PC-3 (cell line): ENCODE measurements at regions of chr3 and their contacts with region 1.

Region 1: GRCh38 chr3:29065211-29065785 is 215.6 kb upstream of the RBMS3 start:
- DNase-seq: peak; percentile 98
- ATAC-seq: peak; percentile 100
- H3K4me3 ChIP-seq: no peak overlapping the region
- H3K27ac ChIP-seq: peak overlapping the region; percentile 61
- H3K4me1 ChIP-seq: peaks cover 14% of the 10 kb centered on the region
- H3K27me3 ChIP-seq: no peaks in the 10 kb centered on the region
- CTCF ChIP-seq: no peak

Region 2: GRCh38 chr3:28853830-28854229 is 211.5 kb before region 1 on chr3:
- CTCF ChIA-PET with region 1: no interaction called
- POLR2A ChIA-PET with region 1: no interaction called
- intact Hi-C with region 1: loop called (anchors 5 kb)
- DNase-seq: peak; percentile 46
- ATAC-seq: peak; percentile 67
- H3K4me3 ChIP-seq: no peak overlapping the region
- H3K27ac ChIP-seq: no peak overlapping the region
- H3K4me1 ChIP-seq: peaks cover 5% of the 10 kb centered on the region; the same call in 1 of the 2 replicates
- H3K27me3 ChIP-seq: no peaks in the 10 kb centered on the region
- CTCF ChIP-seq: peak; percentile 58

Region 3: GRCh38 chr3:28951773-28952556 is 113.3 kb before region 1 on chr3:
- CTCF ChIA-PET with region 1: interaction called, 4 read pairs
- POLR2A ChIA-PET with region 1: no interaction called
- intact Hi-C with region 1: loop called (anchors 1 kb)
- DNase-seq: peak; percentile 77
- ATAC-seq: peak; percentile 97
- H3K4me3 ChIP-seq: no peak overlapping the region; the same call in 1 of the 2 replicates
- H3K27ac ChIP-seq: peak overlapping the region; percentile 71
- H3K4me1 ChIP-seq: peaks cover 20% of the 10 kb centered on the region
- H3K27me3 ChIP-seq: no peaks in the 10 kb centered on the region
- CTCF ChIP-seq: no peak

Region 4: DNA sequence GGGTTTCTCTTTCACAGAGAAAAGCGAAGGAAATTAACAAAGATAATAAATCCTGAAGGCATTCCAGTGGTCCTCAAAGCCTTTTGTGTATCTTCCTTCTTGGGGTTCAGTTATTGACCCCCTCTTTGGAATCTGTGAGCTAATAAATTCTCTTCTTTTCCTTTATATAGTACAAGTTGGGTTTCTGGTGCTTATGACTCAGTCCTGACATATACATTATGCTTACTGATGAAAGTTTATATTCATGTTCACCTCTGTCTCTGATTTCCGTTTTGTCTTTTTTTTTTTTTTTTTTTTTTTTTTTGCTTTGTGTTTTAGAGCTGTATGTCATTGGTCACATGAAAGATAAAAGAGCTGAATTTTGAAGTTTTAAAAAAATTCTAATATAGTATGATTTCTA is 15.1 kb before region 1 on chr3:
- CTCF ChIA-PET with region 1: no interaction called
- POLR2A ChIA-PET with region 1: no interaction called
- intact Hi-C with region 1: no loop called
- DNase-seq: no peak
- ATAC-seq: no peak
- H3K4me3 ChIP-seq: no peak overlapping the region
- H3K27ac ChIP-seq: no peak overlapping the region
- H3K4me1 ChIP-seq: no peaks in the 10 kb centered on the region
- H3K27me3 ChIP-seq: no peaks in the 10 kb centered on the region
- CTCF ChIP-seq: no peak

Region 5: GRCh38 chr3:29202378-29202777 is 137.1 kb after region 1 on chr3:
- CTCF ChIA-PET with region 1: no interaction called
- POLR2A ChIA-PET with region 1: no interaction called
- intact Hi-C with region 1: loop called (anchors 5 kb)
- DNase-seq: peak; percentile 84
- ATAC-seq: peak; percentile 88
- H3K4me3 ChIP-seq: no peak overlapping the region
- H3K27ac ChIP-seq: peak overlapping the region; percentile 21
- H3K4me1 ChIP-seq: peaks cover 24% of the 10 kb centered on the region
- H3K27me3 ChIP-seq: no peaks in the 10 kb centered on the region
- CTCF ChIP-seq: no peak

Region 6: GRCh38 chr3:29525254-29525881 is 460.1 kb after region 1 on chr3:
- CTCF ChIA-PET with region 1: no interaction called
- POLR2A ChIA-PET with region 1: no interaction called
- intact Hi-C with region 1: loop called (anchors 1 kb)
- DNase-seq: peak; percentile 60
- ATAC-seq: peak; percentile 91
- H3K4me3 ChIP-seq: no peak overlapping the region
- H3K27ac ChIP-seq: no peak overlapping the region
- H3K4me1 ChIP-seq: peaks cover 12% of the 10 kb centered on the region; the same call in 1 of the 2 replicates
- H3K27me3 ChIP-seq: no peaks in the 10 kb centered on the region
- CTCF ChIP-seq: no peak